ENCODE measurements at regions of chr14 and their contacts with region 1.

Region 1: GRCh38 chr14:64764641-64765520 is 60.7 kb downstream of the PLEKHG3 start:
- DNase-seq: no peak
- H3K4me3 ChIP-seq: peak overlapping the region; percentile 41
- CTCF ChIP-seq: peak; percentile 97

Region 2: GRCh38 chr14:64671591-64671990 is 93.3 kb before region 1 on chr14:
- CTCF ChIA-PET with region 1: interaction called, 181 read pairs
- POLR2A ChIA-PET with region 1: no interaction called
- DNase-seq: no peak
- H3K4me3 ChIP-seq: no peak overlapping the region
- CTCF ChIP-seq: peak; percentile 61

Region 3: GRCh38 chr14:64745511-64746091 is 19.3 kb before region 1 on chr14:
- CTCF ChIA-PET with region 1: interaction called, 20 read pairs
- POLR2A ChIA-PET with region 1: no interaction called
- DNase-seq: no peak
- H3K4me3 ChIP-seq: no peak overlapping the region
- CTCF ChIP-seq: peak; percentile 20

Region 4: GRCh38 chr14:64778104-64778754 is 13.3 kb after region 1 on chr14:
- CTCF ChIA-PET with region 1: interaction called, 57 read pairs
- POLR2A ChIA-PET with region 1: no interaction called
- DNase-seq: no peak
- H3K4me3 ChIP-seq: no peak overlapping the region
- CTCF ChIP-seq: no peak

Region 5: GRCh38 chr14:65421201-65421981 is 656.5 kb after region 1 on chr14:
- CTCF ChIA-PET with region 1: no interaction called
- POLR2A ChIA-PET with region 1: no interaction called
- DNase-seq: no peak
- H3K4me3 ChIP-seq: peak overlapping the region; percentile 10; the same call in 1 of the 2 replicates
- CTCF ChIP-seq: no peak

Measured in AG04449 (cell line).